Activated CD4-positive, alpha-beta T cell treated with anti-CD3 and anti-CD28 coated beads, Interleukin-2, amount 10 ng/mL, durations not matched to agents 24 days and 14 days (primary cell): ENCODE measurements at regions of chr2 and their contacts with region 1.

Region 1: DNA sequence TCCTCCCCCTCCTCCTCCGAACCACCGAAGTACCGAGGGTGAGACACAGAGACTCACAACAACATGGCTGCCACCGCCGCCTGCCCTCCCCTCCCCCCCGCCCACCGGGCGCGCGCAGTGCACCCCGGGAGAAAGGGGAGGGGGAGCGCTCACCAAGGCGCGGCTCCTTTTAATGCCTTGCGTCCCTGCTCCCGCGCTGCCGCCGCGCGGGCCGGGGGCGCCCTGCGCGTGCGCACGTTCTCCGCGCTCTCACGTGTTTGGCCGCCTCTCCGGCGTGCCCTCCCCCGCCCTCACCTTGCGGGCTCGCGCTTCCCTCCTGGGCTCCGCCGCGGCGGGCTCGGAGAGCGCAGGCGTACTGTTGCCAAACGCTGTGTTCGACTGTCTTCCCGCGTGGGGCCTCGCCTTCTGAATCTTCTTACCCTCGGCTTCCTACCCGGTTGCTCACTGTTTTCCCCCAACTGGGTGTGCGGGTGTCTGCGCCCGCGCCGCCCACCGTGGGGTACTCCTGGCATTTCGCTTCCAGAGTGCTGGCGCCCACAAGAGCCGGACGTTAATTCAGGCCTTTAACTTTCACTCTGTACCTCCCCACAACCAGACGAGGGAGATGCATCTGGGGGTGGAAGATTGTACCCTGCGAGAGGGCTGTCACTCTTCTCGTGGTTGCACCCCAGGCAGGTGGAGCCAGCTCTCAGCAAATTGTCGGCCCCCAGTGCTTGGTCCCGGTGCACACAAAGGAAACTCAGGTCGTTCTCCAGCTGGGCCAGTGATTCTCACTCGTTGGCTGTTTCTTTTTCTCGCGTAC is at the start of gene PUM2:
- DNase-seq: peak; percentile 99
- H3K4me3 Mint-ChIP-seq: no peak within 1 kb of the TSS
- H3K27ac Mint-ChIP-seq: peak within 1 kb of the TSS; percentile 95
- H3K4me1 Mint-ChIP-seq: peaks cover 23% of the 10 kb centered on the region
- H3K27me3 Mint-ChIP-seq: no peaks in the 10 kb centered on the region
- total RNA-seq, gene PUM2: 122 and 130 TPM in 2 replicates

Region 2: DNA sequence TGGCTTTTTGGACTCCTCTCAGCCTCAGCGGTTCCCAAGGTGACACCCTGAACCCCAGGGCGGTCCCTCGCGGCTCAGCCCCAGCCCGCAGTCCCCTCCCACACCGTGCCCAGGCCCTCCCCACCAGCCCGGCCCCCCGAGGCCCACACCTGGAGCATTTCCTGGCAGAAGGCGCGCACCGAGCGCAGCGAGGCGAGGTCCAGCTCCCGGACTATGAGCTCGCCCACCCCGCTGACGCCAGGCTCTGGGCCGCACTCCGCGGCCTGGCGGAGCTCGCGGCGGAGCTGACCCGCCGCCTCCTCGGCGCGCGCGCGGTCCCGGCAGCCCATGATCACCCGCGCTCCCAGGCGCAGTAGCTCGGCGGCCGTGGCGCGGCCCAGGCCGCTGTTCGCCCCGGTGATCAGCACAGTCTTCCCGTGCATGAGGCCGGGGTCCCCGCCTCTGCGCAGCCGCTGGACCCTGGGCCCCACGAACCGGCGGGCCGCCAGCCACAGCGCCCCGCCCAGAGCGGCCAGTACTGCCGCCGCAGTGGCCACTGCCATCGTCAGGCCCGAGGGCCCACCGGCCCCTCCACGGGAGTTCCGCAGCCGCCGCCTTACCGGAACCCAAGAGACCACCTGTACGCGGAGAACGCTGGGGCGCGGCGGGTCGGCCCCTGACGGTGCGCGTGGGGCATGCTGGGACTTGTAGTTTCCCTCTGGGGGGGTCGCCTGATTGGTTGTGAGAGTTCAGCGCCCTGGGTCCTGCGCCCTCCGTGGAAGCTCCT is 1790.7 kb before region 1 on chr2 and contains the start of gene RDH14:
- intact Hi-C with region 1: loop called (anchors 2 kb)
- DNase-seq: peak; percentile 97
- H3K4me3 Mint-ChIP-seq: peak within 1 kb of the TSS; percentile 94
- H3K27ac Mint-ChIP-seq: peak within 1 kb of the TSS; percentile 96
- H3K4me1 Mint-ChIP-seq: peaks cover 29% of the 10 kb centered on the region
- H3K27me3 Mint-ChIP-seq: no peaks in the 10 kb centered on the region
- total RNA-seq, gene RDH14: 14.2 and 15.1 TPM in 2 replicates

Region 3: DNA sequence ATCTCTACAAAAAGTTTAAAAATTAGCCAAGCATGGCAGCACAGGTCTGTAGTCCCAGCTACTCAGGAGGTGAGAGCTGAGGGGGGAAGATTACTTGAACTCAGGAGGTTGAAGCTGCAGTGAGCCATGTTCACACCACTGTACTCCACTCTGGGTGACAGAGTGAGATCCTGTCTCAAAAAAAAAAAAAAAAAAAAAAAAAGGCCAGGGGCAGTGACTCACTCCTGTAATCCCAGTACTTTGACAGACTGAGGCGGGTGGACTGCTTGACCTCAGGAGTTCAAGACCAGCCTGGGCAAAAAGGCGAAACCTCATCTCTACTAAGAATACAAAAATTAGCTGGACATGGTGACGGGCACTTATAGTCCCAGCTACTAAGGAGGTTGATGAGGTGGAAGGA is 37.3 kb before region 1 on chr2:
- intact Hi-C with region 1: loop called (anchors 5 kb)
- DNase-seq: no peak
- H3K4me3 Mint-ChIP-seq: no peak overlapping the region
- H3K27ac Mint-ChIP-seq: no peak overlapping the region
- H3K4me1 Mint-ChIP-seq: peaks cover 14% of the 10 kb centered on the region
- H3K27me3 Mint-ChIP-seq: no peaks in the 10 kb centered on the region

Region 4: GRCh38 chr2:20333738-20334137 is 17.2 kb before region 1 on chr2:
- intact Hi-C with region 1: no loop called
- DNase-seq: no peak
- H3K4me3 Mint-ChIP-seq: no peak overlapping the region
- H3K27ac Mint-ChIP-seq: no peak overlapping the region
- H3K4me1 Mint-ChIP-seq: peaks cover 24% of the 10 kb centered on the region
- H3K27me3 Mint-ChIP-seq: no peaks in the 10 kb centered on the region

Region 5: GRCh38 chr2:20365249-20365817 is 14.4 kb after region 1 on chr2:
- intact Hi-C with region 1: loop called (anchors 1 kb)
- DNase-seq: peak; percentile 88
- H3K4me3 Mint-ChIP-seq: peak overlapping the region; percentile 29
- H3K27ac Mint-ChIP-seq: peak overlapping the region; percentile 74
- H3K4me1 Mint-ChIP-seq: peaks cover 27% of the 10 kb centered on the region
- H3K27me3 Mint-ChIP-seq: no peaks in the 10 kb centered on the region

Region 6: GRCh38 chr2:20378792-20379519 is 28.0 kb after region 1 on chr2:
- intact Hi-C with region 1: no loop called
- DNase-seq: no peak
- H3K4me3 Mint-ChIP-seq: no peak overlapping the region
- H3K27ac Mint-ChIP-seq: no peak overlapping the region
- H3K4me1 Mint-ChIP-seq: peaks cover 7% of the 10 kb centered on the region
- H3K27me3 Mint-ChIP-seq: peaks cover 15% of the 10 kb centered on the region

Region 7: GRCh38 chr2:20650880-20651730 is 300.2 kb after region 1 on chr2 and contains the start of gene HS1BP3:
- intact Hi-C with region 1: loop called (anchors 1 kb)
- DNase-seq: peak; percentile 98
- H3K4me3 Mint-ChIP-seq: peak within 1 kb of the TSS; percentile 85
- H3K27ac Mint-ChIP-seq: peak within 1 kb of the TSS; percentile 89
- H3K4me1 Mint-ChIP-seq: peaks cover 29% of the 10 kb centered on the region
- H3K27me3 Mint-ChIP-seq: peaks cover 11% of the 10 kb centered on the region
- total RNA-seq, gene HS1BP3: 7.1 and 8.9 TPM in 2 replicates